OCI-LY7 (cell line): ENCODE measurements at regions of chr3 and their contacts with region 1.

Region 1: GRCh38 chr3:2849092-2849491 is 261.1 kb downstream of the IL5RA start:
- DNase-seq: no peak
- H3K4me3 ChIP-seq: no peak overlapping the region
- H3K27ac ChIP-seq: no peak overlapping the region
- H3K4me1 ChIP-seq: no peaks in the 10 kb centered on the region
- CTCF ChIP-seq: no peak

Region 2: DNA sequence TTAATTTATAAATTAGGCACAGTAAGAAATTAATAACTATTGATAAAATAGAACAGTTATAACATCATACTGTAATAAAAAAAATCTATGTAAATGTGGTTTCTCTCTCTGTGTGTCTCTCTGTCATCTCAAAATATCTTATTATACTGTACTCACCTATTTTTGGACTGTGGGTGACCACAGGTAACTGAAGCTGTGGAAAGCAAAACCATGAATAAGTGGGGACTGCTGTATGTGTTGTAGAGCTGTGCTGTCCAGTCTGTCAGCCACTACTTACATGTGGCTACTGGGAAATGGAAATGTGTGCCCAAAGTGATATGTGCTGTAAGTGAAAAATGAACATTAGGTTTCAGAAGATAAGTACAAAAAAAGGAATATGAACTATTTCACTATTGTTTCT is 605.0 kb before region 1 on chr3:
- CTCF ChIA-PET with region 1: no interaction called
- POLR2A ChIA-PET with region 1: no interaction called
- intact Hi-C with region 1: no loop called
- DNase-seq: no peak
- H3K4me3 ChIP-seq: no peak overlapping the region
- H3K27ac ChIP-seq: no peak overlapping the region
- H3K4me1 ChIP-seq: no peaks in the 10 kb centered on the region
- CTCF ChIP-seq: no peak

Region 3: GRCh38 chr3:2686816-2687502 is 162.1 kb before region 1 on chr3:
- CTCF ChIA-PET with region 1: no interaction called
- POLR2A ChIA-PET with region 1: no interaction called
- intact Hi-C with region 1: no loop called
- DNase-seq: no peak
- H3K4me3 ChIP-seq: no peak overlapping the region
- H3K27ac ChIP-seq: no peak overlapping the region
- H3K4me1 ChIP-seq: no peaks in the 10 kb centered on the region
- CTCF ChIP-seq: no peak

Region 4: DNA sequence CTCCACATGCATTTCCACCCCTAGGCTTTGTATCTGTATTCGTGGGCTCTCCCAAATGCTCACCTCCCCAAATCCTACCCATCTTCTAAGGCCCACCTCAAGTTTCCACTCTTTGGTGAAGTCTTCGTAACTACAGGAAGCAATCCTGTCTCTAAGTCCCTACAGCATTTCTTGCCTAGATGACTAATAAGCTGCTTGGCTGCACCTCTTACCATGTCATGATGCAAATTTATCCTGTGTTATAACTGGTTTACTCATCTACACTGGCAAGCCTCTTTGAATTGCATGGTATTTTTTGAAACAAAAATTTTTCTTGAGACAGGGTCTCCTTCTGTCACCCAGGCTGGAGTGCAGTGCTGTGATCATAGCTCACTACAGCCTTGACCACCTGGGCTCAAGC is 1527.4 kb after region 1 on chr3:
- CTCF ChIA-PET with region 1: no interaction called
- POLR2A ChIA-PET with region 1: interaction called, 10 read pairs
- intact Hi-C with region 1: no loop called
- DNase-seq: no peak
- H3K4me3 ChIP-seq: no peak overlapping the region
- H3K27ac ChIP-seq: no peak overlapping the region
- H3K4me1 ChIP-seq: no peaks in the 10 kb centered on the region
- CTCF ChIP-seq: no peak